PC-9 (cell line): ENCODE measurements at regions of chr2 and their contacts with region 1.

Region 1: DNA sequence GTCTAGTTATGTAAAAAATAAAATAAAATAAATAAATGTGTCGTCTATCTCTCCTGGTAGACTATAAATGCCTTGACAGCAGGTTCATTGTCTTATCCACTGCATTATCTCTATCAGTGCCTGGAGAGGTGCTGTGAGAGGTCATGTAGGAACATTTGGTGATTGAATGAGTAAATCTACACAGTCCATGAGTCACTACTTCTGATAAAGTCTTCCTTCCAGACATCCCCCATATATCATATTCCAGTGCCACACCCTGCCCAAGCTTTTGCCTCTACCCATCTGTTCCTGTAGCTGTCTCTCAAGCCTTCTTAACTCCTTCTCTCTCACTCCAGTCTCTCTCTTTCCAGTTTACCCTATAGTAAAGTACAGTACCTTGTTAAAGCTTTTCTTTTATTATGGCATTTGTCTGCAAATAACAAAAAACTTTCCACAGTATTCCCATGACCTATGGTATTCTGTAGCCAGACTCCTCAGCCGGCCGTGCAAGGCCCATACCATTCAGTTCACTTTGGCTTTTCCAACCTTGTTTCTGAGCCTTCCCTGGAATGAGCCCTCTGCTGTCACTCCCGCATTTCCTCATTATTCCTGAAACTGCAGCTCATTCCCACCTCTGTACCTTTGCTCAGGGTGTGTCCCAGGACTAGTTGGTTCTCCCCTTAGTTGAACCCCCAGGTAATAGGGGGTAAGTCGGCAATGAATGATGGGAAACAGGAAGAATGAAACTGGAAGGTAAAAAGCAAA is 37.5 kb downstream of the ANXA4 start:
- DNase-seq: peak; percentile 27 to 77
- H3K4me3 ChIP-seq: no peak overlapping the region
- H3K27ac ChIP-seq: 0 out of 2 replicates have a peak overlapping the region, but pooled peaks have one; percentile 4
- H3K4me1 ChIP-seq: peaks cover 56% of the 10 kb centered on the region
- H3K27me3 ChIP-seq: no peaks in the 10 kb centered on the region
- CTCF ChIP-seq: no peak

Region 2: GRCh38 chr2:69477627-69478026 is 301.8 kb before region 1 on chr2:
- CTCF ChIA-PET with region 1: no interaction called
- POLR2A ChIA-PET with region 1: interaction called, 10 read pairs
- intact Hi-C with region 1: no loop called
- DNase-seq: no peak
- H3K4me3 ChIP-seq: no peak overlapping the region
- H3K27ac ChIP-seq: no peak overlapping the region
- H3K4me1 ChIP-seq: no peaks in the 10 kb centered on the region
- H3K27me3 ChIP-seq: no peaks in the 10 kb centered on the region
- CTCF ChIP-seq: no peak

Region 3: GRCh38 chr2:69741619-69742466 is 37.6 kb before region 1 on chr2 and contains the start of gene ANXA4:
- CTCF ChIA-PET with region 1: no interaction called
- POLR2A ChIA-PET with region 1: no interaction called
- intact Hi-C with region 1: no loop called
- DNase-seq: peak; percentile 71 to 86
- H3K4me3 ChIP-seq: peak within 1 kb of the TSS; percentile 71
- H3K27ac ChIP-seq: peak within 1 kb of the TSS; percentile 72
- H3K4me1 ChIP-seq: peaks cover 51% of the 10 kb centered on the region
- H3K27me3 ChIP-seq: no peaks in the 10 kb centered on the region
- CTCF ChIP-seq: no peak
- total RNA-seq, gene ANXA4: 82.9 and 109 TPM in 2 replicates